Activated B cell treated with CpG ODN at 0.5 μM for 24 hours (primary cell): ENCODE measurements at regions of chr5 and their contacts with region 1.

Region 1: DNA sequence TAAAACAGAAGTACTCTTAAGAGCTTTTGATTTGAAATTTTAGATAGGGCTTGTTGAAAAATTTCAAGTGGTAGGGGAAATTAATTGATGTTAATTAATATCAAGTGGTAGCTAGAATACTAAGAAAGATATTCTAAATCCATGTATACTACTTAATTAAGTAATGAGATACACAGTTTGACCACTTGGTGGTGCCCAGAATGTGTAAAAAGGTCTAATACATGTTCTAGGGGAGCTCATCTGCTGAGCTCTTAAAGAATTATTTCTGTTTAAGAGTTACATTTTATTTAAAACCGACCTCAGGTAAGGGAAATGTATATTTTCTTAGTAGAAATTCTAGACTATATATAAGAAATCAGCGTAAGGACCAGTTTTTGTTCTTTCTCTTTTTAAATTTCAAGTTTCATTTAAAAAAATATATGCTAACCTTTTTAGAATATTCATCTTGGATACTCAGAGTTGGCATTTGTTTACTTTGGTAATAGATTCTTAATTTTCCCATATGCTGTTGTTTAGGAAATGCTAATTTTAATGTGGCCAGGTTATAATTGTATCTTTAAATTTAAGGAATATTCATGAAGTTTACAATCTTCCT is 61.5 kb downstream of the LNPEP start:
- DNase-seq: no peak
- ATAC-seq: peak; percentile 68
- H3K4me3 Mint-ChIP-seq: no peak overlapping the region
- H3K27ac Mint-ChIP-seq: no peak overlapping the region
- H3K4me1 Mint-ChIP-seq: peaks cover 6% of the 10 kb centered on the region
- H3K27me3 Mint-ChIP-seq: no peaks in the 10 kb centered on the region
- CTCF ChIP-seq: no peak

Region 2: GRCh38 chr5:95471942-95472341 is 1525.4 kb before region 1 on chr5:
- CTCF ChIA-PET with region 1: no interaction called
- POLR2A ChIA-PET with region 1: no interaction called
- intact Hi-C with region 1: no loop called
- DNase-seq: no peak
- ATAC-seq: no peak
- H3K4me3 Mint-ChIP-seq: no peak overlapping the region
- H3K27ac Mint-ChIP-seq: no peak overlapping the region
- H3K4me1 Mint-ChIP-seq: no peaks in the 10 kb centered on the region
- H3K27me3 Mint-ChIP-seq: no peaks in the 10 kb centered on the region
- CTCF ChIP-seq: no peak

Region 3: DNA sequence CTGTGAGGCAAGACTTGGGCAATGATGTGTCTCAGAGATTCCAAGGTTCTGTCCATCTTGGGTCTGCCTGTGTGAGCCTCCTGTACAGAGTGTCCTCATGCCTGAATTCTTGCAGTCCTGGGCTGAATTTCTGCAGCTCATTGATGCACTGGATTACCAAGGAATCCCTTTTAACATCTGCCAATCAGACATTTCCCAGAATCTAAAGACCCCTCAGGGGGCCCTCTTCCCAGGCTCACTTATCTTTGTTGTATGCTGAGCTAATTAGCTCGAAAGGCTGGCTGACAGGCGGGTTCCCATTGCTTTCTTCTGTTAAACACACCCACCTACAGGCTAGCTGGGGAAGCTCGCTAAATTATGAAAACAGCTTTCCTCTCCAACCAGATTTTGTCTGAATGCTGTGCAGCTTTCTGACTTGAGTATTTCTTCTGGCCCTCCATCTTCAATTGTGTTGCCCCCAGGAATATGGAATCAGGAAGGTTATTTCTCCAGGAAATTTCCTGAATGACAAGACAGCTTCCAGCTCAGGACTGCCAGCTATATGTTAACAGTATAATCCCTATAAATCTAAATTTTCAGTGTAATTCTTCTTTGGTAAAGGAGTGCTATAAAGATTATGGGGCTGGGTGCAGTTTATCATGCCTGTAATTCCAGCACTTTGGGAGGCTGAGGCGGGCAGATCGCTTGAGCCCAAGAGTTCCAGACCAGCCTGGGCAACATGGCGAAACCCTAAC is 145.3 kb after region 1 on chr5 and contains the start of gene LIX1:
- CTCF ChIA-PET with region 1: interaction called, 42 read pairs
- POLR2A ChIA-PET with region 1: no interaction called
- intact Hi-C with region 1: loop called (anchors 1 kb)
- DNase-seq: no peak
- ATAC-seq: peak; percentile 60
- H3K4me3 Mint-ChIP-seq: no peak within 1 kb of the TSS
- H3K27ac Mint-ChIP-seq: no peak within 1 kb of the TSS
- H3K4me1 Mint-ChIP-seq: no peaks in the 10 kb centered on the region
- H3K27me3 Mint-ChIP-seq: peaks cover 3% of the 10 kb centered on the region
- CTCF ChIP-seq: no peak
- total RNA-seq, gene LIX1: not detected in 2 replicates

Region 4: GRCh38 chr5:97162045-97162444 is 164.7 kb after region 1 on chr5:
- CTCF ChIA-PET with region 1: interaction called, 41 read pairs
- POLR2A ChIA-PET with region 1: interaction called, 5 read pairs
- intact Hi-C with region 1: loop called (anchors 1 kb)
- DNase-seq: no peak
- ATAC-seq: peak; percentile 31
- H3K4me3 Mint-ChIP-seq: no peak overlapping the region
- H3K27ac Mint-ChIP-seq: no peak overlapping the region
- H3K4me1 Mint-ChIP-seq: peaks cover 3% of the 10 kb centered on the region
- H3K27me3 Mint-ChIP-seq: no peaks in the 10 kb centered on the region
- CTCF ChIP-seq: peak; percentile 68